OCI-LY7 (cell line): ENCODE measurements at regions of chr3 and their contacts with region 1.

Region 1: GRCh38 chr3:42880601-42881451 is 5.1 kb upstream of the CYP8B1 start:
- DNase-seq: peak; percentile 92
- H3K4me3 ChIP-seq: peak overlapping the region; percentile 68
- H3K27ac ChIP-seq: no peak overlapping the region
- H3K4me1 ChIP-seq: peaks cover 11% of the 10 kb centered on the region
- CTCF ChIP-seq: peak; percentile 79

Region 2: DNA sequence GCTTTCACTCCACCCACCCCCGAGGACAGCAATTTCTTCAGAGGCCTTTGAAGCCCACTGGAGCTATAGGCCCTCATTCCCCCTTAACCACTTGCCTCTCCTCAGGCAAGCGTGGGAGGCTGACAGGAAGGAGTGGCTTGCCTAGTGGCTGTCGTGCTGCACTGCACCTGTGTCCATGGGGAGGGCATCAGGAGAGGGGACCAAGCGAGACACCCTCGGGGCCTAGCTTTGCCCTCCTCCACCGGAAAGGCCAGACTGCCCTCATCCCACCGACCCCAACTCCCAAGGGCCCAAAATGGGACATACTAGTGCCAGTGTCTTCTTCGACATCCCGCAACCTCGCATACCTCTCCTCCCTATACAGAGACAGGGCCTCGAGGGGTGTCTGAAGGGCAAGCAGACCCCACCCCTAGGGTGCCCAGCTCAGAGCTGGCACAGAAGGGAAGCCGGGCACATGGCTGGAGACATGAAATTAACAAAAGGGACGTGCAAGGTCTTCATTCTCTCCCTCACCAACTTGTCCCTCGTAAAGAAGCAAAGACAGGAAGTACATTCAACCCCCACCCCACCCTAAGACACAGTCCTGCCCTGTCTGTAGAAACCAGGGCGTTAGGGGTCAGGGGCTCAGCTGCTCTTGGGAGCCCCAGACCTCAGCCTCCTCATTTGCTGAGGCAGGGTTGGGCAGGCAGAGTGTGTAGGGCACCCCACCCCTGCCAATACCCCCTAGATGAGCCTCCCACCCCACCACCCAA is 354.0 kb before region 1 on chr3:
- CTCF ChIA-PET with region 1: no interaction called
- POLR2A ChIA-PET with region 1: no interaction called
- intact Hi-C with region 1: no loop called
- DNase-seq: no peak
- H3K4me3 ChIP-seq: no peak overlapping the region
- H3K27ac ChIP-seq: no peak overlapping the region
- H3K4me1 ChIP-seq: no peaks in the 10 kb centered on the region
- CTCF ChIP-seq: no peak

Region 3: DNA sequence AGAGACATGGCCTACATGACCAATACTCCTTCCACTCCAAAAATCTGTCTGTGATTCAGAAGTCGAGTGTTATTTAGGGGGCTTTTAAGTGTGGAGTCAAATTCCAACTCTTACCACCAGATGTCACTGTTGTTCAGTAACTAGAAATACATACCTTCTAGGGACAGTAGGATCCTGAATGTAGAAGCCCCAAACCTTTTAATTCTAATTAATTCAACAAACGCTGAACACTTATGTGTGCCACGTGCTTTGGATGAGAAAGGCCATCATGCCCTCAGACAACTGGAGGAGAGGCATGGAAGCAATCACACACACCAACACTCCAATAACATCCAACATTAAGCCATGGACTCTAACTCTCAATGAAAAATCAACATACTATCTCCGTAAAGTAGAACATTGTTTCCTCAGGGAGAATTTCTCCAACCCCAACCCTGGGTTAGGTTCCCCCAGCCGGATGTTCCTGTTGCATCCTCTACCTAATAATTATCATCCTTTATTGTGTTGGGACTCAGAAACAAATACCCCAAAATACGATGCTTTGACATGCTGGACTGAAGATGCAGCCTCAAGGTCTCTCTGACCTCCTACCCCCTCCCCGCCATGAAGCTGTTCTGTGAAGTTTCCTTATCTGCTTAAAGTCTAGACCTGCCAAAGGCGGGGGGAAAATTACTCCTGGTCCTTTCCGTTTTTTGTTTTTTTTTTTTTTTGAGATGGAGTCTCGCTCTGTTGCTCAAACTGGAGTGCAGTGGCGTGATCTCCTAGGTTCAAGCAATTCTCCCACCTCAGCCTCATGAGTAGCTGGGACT is 99.7 kb before region 1 on chr3:
- CTCF ChIA-PET with region 1: interaction called, 5 read pairs
- POLR2A ChIA-PET with region 1: interaction called, 3 read pairs
- intact Hi-C with region 1: loop called (anchors 1 kb)
- DNase-seq: peak; percentile 76
- H3K4me3 ChIP-seq: no peak overlapping the region
- H3K27ac ChIP-seq: no peak overlapping the region
- H3K4me1 ChIP-seq: no peaks in the 10 kb centered on the region
- CTCF ChIP-seq: peak; percentile 91